AG04450 (cell line): ENCODE measurements at regions of chr12 and their contacts with region 1.

Region 1: GRCh38 chr12:54689984-54690383 is 41.8 kb upstream of the DCD start:
- DNase-seq: no peak
- H3K4me3 ChIP-seq: no peak overlapping the region
- H3K27ac ChIP-seq: no peak overlapping the region
- H3K27me3 ChIP-seq: no peaks in the 10 kb centered on the region
- CTCF ChIP-seq: 0 out of 2 replicates have a peak, but pooled peaks have one; percentile 18

Region 2: DNA sequence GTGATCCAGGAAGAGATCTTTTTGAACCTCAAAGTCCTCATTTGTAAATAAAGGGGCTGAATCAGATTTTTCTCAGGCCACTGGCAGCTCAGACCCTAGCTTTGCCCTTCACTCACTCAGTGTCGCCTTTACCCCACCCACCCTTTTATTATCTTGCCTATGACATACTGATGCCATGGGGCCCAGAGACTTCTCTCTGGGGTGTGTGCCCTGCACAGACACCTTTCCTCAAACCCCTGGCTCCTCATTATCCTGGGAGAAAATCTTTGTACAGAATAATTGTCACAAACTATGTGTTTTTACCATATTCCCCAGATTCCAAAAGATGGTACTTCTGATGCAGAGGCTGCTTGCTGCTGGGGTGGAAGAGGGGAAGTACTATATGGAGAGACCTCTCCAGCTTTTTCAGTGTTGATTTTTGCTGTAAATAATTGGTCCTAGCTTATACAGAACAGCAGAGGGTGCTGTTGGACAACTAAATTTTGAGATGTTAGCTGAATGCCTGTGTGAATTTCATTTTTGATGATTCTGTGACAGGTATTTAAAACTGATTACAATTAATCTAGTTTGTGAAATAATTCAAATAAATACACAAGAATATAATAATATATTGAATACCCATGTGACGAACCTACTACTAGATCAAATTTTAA is 12.1 kb after region 1 on chr12:
- CTCF ChIA-PET with region 1: interaction called, 10 read pairs
- POLR2A ChIA-PET with region 1: no interaction called
- DNase-seq: no peak
- H3K4me3 ChIP-seq: no peak overlapping the region
- H3K27ac ChIP-seq: no peak overlapping the region
- H3K27me3 ChIP-seq: no peaks in the 10 kb centered on the region
- CTCF ChIP-seq: peak; percentile 59